ENCODE measurements at regions of chr14 and their contacts with region 1.

Region 1: GRCh38 chr14:95713596-95714371 is at the start of gene TCL1A:
- DNase-seq: peak; percentile 93
- H3K4me3 ChIP-seq: peak within 1 kb of the TSS; percentile 99
- H3K27ac ChIP-seq: peak within 1 kb of the TSS; percentile 86
- H3K4me1 ChIP-seq: peaks cover 57% of the 10 kb centered on the region
- CTCF ChIP-seq: peak; percentile 70
- total RNA-seq, gene TCL1A: 1,441 and 1,586 TPM in 2 replicates

Region 2: GRCh38 chr14:95652690-95653089 is 61.1 kb before region 1 on chr14:
- CTCF ChIA-PET with region 1: no interaction called
- POLR2A ChIA-PET with region 1: interaction called, 10 read pairs
- intact Hi-C with region 1: no loop called
- DNase-seq: peak; percentile 90
- H3K4me3 ChIP-seq: peak overlapping the region; percentile 39
- H3K27ac ChIP-seq: peak overlapping the region; percentile 91
- H3K4me1 ChIP-seq: peaks cover 66% of the 10 kb centered on the region
- CTCF ChIP-seq: no peak

Region 3: DNA sequence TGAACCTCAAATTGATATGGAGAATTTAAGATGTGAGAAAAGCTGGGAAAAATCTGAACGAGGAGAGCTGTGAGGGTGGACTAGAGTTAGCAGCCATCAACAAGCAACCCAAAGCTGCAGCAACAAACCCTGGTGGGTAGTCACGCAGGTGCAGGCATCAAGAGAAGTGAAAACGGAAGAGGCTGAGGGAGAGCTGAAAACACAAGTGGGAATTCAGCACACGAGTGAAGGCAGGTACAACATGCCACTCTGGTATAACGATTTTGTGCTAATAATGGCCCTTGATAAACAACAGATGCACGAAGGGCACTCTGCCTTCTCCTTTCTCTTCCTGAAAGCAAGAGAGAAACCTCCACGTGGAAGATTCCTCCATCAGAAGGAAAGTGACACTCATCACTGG is 16.0 kb before region 1 on chr14:
- CTCF ChIA-PET with region 1: no interaction called
- POLR2A ChIA-PET with region 1: interaction called, 72 read pairs
- intact Hi-C with region 1: loop called (anchors 1 kb)
- DNase-seq: peak; percentile 94
- H3K4me3 ChIP-seq: peak overlapping the region; percentile 49
- H3K27ac ChIP-seq: peak overlapping the region; percentile 100
- H3K4me1 ChIP-seq: peaks cover 97% of the 10 kb centered on the region
- CTCF ChIP-seq: no peak

Region 4: DNA sequence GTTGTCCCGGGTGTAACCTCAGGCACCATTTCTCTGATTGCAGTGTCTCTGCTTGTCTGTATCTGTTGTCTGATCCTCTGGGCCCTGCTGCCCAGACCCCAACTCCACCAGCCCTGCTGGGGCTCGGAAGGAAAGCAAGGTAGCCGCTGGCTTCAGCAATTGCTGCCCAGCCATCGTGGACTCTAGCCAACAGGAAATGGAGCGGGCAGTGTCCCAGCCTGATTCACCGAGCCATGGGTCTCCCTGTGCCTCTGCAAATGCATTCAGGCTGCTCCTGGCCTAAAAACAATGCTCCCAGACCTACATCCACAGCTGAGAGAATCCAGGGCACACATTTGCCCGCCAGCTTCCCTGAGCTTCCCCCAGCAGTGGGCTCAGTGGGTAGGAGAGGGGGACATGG is 172.1 kb after region 1 on chr14:
- CTCF ChIA-PET with region 1: no interaction called
- POLR2A ChIA-PET with region 1: interaction called, 3 read pairs
- intact Hi-C with region 1: loop called (anchors 10 kb)
- DNase-seq: no peak
- H3K4me3 ChIP-seq: no peak overlapping the region
- H3K27ac ChIP-seq: no peak overlapping the region
- H3K4me1 ChIP-seq: peaks cover 70% of the 10 kb centered on the region
- CTCF ChIP-seq: no peak

Region 5: DNA sequence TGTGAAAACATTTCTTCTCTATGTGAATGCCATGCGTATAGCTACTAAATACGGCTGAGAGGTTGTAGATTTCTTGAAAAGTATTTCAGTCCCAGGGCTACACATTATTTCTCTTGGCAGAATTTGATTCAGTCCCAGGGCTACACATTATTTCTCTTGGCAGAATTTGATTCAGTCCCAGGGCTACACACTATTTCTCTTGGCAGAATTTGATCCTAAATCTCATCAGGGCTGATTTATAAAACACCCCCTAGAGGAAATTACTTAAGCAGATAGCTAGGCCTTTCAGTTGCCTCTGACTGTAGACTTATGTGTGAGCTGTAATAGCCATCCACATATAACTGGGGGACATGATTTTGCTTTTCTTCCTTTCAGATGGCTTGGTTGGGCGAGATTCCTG is 728.6 kb after region 1 on chr14:
- CTCF ChIA-PET with region 1: no interaction called
- POLR2A ChIA-PET with region 1: no interaction called
- intact Hi-C with region 1: no loop called
- DNase-seq: no peak
- H3K4me3 ChIP-seq: no peak overlapping the region
- H3K27ac ChIP-seq: no peak overlapping the region
- H3K4me1 ChIP-seq: no peaks in the 10 kb centered on the region
- CTCF ChIP-seq: no peak

Measured in OCI-LY7 (cell line).